Posterior vena cava (tissue), 2 donors: ENCODE measurements at regions of chr5 and their contacts with region 1.

Region 1: DNA sequence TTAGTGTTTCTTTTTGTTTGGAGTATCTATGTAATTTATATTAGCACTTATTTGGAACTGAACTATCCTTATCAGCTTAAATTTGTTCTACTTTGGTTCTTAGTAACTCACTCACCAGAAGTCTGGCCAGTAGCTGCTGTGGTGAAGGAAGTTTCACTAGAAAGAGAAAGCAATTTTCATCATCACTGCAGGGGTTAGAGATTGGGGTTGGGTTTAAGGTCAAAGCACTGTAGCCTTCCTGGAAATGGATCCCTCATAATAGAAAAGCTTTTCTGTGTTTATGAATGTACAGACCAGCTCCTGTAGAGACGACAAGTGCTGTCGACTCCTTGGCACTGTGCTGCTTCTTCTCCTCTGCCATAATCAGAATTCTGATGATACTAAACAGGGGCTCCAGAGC is 22.2 kb downstream of the MROH2B start:
- DNase-seq: no peak

Region 2: GRCh38 chr5:41032973-41033372 is 16.0 kb before region 1 on chr5:
- intact Hi-C with region 1: no loop called
- DNase-seq: no peak

Region 3: GRCh38 chr5:41127967-41128690 is 79.1 kb after region 1 on chr5:
- intact Hi-C with region 1: loop called in 1 of 2 experiments (anchors 5 kb)
- DNase-seq: no peak

Region 4: DNA sequence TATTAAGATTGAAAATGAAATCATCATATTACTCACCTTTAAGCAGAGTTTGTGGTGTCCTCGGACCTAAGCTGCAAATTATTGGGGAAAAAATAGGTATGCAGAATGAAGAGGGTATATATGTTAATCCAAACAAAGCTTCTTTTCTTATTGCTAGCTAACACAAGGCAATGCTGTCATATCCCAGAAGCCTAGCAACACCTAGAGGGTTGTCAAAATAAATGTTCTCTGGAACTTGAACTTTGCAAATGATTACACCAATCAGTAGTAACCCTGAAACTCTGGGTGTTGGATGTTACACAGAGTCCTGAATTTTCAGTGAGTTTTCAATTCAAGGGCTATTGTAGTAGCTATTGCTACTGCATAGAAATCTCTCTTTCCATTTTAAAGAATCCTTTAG is 164.4 kb after region 1 on chr5 and contains the start of gene C6:
- intact Hi-C with region 1: no loop called
- DNase-seq: no peak
- total RNA-seq, gene C6: 2.6 to 6.9 TPM

Region 5: GRCh38 chr5:41334758-41335157 is 285.8 kb after region 1 on chr5:
- intact Hi-C with region 1: no loop called
- DNase-seq: no peak